ENCODE measurements at regions of chr14 and their contacts with region 1.

Region 1: DNA sequence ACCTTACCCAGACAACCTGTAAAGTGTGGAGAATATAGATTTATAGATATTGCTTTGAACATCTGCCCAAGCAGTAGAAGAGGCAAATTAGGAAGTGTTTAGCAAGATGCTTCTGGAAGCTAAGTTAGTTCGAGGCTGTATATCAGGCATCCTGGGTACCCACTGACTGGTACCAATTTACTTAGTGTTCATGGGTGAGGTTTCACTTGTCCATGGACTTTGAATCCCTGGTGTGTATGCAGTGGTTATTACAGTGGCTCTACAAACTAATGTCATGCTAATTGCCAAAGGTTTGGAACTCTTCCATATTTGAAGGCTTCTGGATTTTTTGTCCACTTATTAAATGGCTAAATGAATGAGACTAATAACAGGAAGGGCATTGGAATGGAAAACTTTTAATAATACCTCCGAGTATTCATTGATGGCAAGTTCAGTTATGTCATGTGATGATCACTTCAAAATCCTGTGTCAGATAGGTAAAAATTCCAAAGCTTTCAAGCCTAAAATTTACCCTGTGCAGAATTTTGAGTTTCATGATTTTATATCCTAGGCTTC is at the start of gene OR4E2:
- DNase-seq: no peak
- CTCF ChIP-seq: no peak

Region 2: DNA sequence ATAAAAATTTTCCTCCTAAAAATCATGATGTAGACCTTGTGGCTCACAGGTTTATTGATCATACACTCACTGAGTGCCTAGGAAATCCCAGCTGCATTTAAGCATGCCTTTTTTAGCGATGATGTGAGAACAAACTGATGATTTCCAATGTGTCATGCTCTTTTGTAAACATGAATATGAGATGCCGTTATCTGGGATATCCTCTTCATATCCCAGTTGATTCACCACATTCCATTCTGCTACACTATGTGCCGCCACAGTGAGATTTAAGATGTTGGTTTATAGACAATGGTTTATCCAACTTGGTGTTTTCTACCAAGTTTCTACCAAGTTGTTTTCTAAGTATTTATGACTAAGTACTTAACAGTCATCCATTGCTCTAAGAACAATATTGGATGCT is 15.0 kb after region 1 on chr14:
- CTCF ChIA-PET with region 1: interaction called, 11 read pairs
- POLR2A ChIA-PET with region 1: no interaction called
- DNase-seq: no peak
- CTCF ChIP-seq: no peak

Measured in GM10248 (cell line).